ENCODE measurements at regions of chr5 and their contacts with region 1.

Region 1: DNA sequence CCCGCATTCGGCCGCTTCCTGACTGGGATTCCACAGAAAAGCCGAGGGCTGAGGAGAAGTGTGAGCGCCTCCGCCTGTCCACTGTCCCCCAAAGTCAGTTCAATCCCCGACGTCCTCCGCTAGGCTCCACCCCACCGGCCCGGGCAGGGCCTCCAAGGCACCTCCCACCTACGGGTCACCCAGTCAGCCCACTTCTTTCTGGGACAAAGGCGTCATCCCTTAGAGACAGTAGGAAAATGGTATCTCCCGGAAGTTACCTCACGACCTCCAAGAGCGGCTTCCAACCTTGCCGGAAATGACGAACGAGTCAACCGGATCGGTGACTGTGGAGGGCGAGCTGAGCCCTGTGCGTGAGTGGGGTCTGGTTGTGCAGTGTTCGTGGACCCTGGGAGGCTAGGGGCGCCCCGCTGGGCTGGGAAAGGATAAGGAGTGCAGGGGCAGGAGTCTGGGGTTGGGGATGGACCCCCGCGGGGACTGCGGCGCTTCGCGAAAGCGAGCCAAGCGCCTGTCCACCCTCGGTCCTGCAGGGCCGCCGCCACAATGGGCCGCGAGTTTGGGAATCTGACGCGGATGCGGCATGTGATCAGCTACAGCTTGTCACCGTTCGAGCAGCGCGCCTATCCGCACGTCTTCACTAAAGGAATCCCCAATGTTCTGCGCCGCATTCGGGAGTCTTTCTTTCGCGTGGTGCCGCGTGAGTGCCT is at the starts of genes GDF9 and UQCRQ:
- DNase-seq: peak; percentile 100
- H3K4me3 Mint-ChIP-seq: peak within 1 kb of the TSS; percentile 93
- H3K27ac Mint-ChIP-seq: peak within 1 kb of the TSS; percentile 96
- H3K4me1 Mint-ChIP-seq: peaks cover 17% of the 10 kb centered on the region
- H3K27me3 Mint-ChIP-seq: no peaks in the 10 kb centered on the region
- CTCF ChIP-seq: peak; percentile 32
- total RNA-seq, gene GDF9: 0.51 and 0.79 TPM in 2 replicates
- total RNA-seq, gene UQCRQ: 974 and 1,181 TPM in 2 replicates

Region 2: GRCh38 chr5:132526290-132526973 is 340.1 kb before region 1 on chr5:
- CTCF ChIA-PET with region 1: interaction called, 5 read pairs
- POLR2A ChIA-PET with region 1: no interaction called
- intact Hi-C with region 1: loop called (anchors 1 kb)
- DNase-seq: peak; percentile 83
- H3K4me3 Mint-ChIP-seq: no peak overlapping the region
- H3K27ac Mint-ChIP-seq: no peak overlapping the region
- H3K4me1 Mint-ChIP-seq: no peaks in the 10 kb centered on the region
- H3K27me3 Mint-ChIP-seq: peaks cover 23% of the 10 kb centered on the region
- CTCF ChIP-seq: peak; percentile 96

Region 3: DNA sequence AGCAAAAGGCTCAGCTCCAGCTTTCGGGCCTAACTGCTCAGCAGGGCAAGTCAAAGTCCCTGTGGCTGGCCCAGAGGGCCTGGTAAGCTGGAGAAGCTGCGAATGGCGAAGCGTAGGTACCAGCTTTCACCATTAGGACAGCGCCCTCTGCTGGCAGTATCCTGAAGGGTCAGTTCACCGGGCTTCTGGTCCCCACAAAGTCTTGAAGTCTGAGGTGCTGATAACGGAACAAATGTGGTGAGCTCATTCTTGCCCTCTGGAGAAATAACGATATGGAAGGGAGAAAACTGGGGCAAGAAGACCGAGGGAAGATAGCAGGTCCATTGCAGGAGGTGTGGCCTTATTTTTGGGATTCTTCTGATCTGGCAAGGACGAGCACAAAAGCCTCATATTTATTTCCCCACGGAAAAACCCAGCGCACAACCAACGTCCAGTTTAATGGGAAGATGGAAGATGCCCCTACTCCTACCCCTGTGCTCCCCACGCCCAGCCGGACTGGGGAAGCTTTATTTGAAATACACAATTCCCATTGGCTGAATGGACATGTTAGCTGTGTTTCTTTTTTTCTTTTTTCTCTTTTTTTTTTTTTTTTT is 46.2 kb before region 1 on chr5:
- CTCF ChIA-PET with region 1: interaction called, 25 read pairs
- POLR2A ChIA-PET with region 1: interaction called, 14 read pairs
- intact Hi-C with region 1: no loop called
- DNase-seq: peak; percentile 96
- H3K4me3 Mint-ChIP-seq: no peak overlapping the region
- H3K27ac Mint-ChIP-seq: no peak overlapping the region
- H3K4me1 Mint-ChIP-seq: peaks cover 8% of the 10 kb centered on the region
- H3K27me3 Mint-ChIP-seq: no peaks in the 10 kb centered on the region
- CTCF ChIP-seq: peak; percentile 97

Region 4: DNA sequence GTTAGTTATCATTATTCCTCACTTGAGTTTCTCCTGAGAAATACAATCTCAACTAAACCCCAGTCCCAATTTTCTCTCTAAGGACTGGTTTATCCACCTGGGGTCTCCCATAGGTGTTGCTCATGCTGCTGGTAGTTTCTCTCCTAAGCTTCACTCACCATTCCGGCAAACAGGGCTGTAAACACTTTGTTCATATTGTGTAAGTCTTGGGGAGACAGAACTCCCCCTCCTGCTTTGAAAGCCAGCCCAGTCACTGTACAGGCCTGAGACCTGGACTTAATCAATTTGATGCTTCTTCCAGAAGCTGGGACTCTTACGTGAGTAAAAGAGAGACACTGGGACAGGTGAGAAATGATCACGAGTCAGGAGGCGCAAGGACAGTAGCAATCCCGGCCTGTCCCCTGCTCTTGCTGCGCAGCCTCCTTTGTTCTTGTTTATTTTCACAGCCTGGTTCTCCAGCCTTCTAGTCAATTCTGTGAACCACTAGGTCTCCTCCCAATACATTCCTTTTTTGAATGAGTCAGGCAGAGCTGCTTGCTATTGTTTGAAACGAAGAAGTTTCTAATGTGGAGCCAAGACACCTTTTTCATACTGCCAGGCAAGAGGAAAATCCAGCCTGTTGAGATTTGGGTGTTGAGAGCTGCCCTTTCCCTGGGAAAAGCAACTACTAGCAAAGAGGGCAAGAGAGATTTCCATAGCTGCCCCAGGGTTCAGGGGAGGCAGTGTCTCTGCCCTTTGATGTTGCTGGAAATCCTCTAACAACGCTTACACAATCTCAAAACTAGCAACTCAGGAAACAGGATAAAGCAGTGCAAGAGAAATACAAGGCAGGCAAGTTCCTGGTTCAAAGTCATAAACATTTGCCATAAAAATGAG is 26.8 kb before region 1 on chr5:
- CTCF ChIA-PET with region 1: interaction called, 211 read pairs
- POLR2A ChIA-PET with region 1: interaction called, 176 read pairs
- intact Hi-C with region 1: loop called (anchors 1 kb)
- DNase-seq: peak; percentile 89
- H3K4me3 Mint-ChIP-seq: peak overlapping the region; percentile 19
- H3K27ac Mint-ChIP-seq: peak overlapping the region; percentile 99
- H3K4me1 Mint-ChIP-seq: peaks cover 30% of the 10 kb centered on the region
- H3K27me3 Mint-ChIP-seq: no peaks in the 10 kb centered on the region
- CTCF ChIP-seq: no peak

Region 5: DNA sequence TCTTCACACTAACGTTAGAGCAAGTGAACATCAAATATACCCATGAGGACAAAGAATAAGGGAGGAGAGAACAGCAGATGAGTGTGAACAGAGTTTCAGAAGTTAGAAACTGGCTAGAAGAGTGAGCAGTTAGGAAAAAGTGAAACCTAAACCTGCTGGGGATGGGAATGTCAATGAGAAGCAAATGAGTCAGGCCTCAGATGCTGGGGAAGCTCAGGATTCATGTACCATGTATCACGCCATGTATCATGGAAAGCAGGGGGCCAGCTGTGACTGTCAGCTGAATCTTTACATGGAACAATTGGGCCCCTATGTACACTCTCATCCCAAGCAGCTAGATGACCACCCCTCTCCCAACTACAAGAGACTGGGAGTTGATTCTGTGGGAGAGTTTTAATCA is 16.4 kb before region 1 on chr5:
- CTCF ChIA-PET with region 1: interaction called, 37 read pairs
- POLR2A ChIA-PET with region 1: interaction called, 53 read pairs
- intact Hi-C with region 1: no loop called
- DNase-seq: no peak
- H3K4me3 Mint-ChIP-seq: no peak overlapping the region
- H3K27ac Mint-ChIP-seq: no peak overlapping the region
- H3K4me1 Mint-ChIP-seq: no peaks in the 10 kb centered on the region
- H3K27me3 Mint-ChIP-seq: no peaks in the 10 kb centered on the region
- CTCF ChIP-seq: no peak

Region 6: GRCh38 chr5:132883261-132883834 is 16.9 kb after region 1 on chr5:
- CTCF ChIA-PET with region 1: interaction called, 35 read pairs
- POLR2A ChIA-PET with region 1: interaction called, 16 read pairs
- intact Hi-C with region 1: no loop called
- DNase-seq: peak; percentile 80
- H3K4me3 Mint-ChIP-seq: no peak overlapping the region
- H3K27ac Mint-ChIP-seq: no peak overlapping the region
- H3K4me1 Mint-ChIP-seq: peaks cover 8% of the 10 kb centered on the region
- H3K27me3 Mint-ChIP-seq: no peaks in the 10 kb centered on the region
- CTCF ChIP-seq: peak; percentile 70